Right ventricle myocardium superior (tissue), 1 donor: ENCODE measurements at regions of chr6 and their contacts with region 1.

Region 1: DNA sequence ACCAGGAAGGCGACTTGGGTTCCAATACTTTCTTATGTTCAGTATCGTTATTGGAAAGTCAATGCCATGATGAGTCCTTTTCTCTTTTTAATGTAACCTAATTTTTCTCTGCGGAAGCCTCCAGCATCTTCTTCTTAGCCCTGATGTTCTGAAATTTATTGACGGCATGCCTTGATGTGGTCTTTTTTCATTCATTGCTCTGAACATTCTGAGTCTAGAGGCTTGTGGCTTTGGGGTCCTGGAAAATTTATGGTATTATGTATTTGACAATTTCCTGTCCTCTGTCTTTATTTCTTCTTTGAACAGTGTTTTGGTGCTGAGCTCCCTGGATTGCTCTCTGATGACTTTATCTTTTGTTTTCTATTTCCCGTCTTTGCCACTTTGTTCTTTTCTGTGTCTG is 28.7 kb upstream of the MAS1 start:
- DNase-seq: no peak
- ATAC-seq: no peak

Region 2: GRCh38 chr6:159941286-159942113 is 79.4 kb after region 1 on chr6:
- intact Hi-C with region 1: loop called (anchors 5 kb)
- DNase-seq: no peak
- ATAC-seq: peak; percentile 47

Region 3: DNA sequence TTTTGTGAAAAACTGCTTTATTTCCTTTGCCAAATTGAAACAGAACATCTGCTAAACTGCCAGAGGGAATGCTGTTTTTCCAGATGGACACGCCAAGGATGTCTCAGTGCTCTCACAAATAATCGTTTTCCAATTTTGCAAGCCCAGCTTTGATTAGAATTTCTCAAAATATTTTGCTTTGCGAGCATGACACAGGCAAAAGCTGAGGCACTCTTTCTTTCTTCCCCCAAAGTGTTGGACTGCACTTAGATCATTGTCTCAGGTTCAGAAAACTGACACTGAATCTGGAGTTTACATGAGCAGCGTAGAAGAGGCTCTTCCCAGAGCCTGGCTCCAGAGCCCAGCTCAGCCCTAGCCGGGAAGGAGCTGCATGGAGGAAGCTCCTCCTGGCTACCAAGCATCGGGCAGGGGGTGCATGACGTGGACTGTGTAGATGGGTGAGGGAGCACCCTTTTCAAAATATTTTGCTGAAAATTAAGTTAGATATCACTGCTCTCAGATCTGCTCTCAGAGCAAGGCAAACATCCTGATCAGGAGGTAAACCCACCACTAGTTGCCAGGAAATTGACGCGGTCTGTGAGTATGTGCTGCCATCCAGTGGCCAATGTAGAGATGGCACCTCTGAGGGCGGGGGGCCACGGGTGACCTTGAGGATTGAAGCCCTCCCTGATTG is 593.6 kb after region 1 on chr6:
- intact Hi-C with region 1: loop called (anchors 5 kb)
- DNase-seq: peak; percentile 67
- ATAC-seq: peak; percentile 93